ENCODE measurements at regions of chr9 and their contacts with region 1.

Region 1: GRCh38 chr9:84404095-84404686 is 63.6 kb upstream of the SLC28A3 start:
- ATAC-seq: peak in 2 of 8 experiments; percentile 39 to 40
- H3K4me3 ChIP-seq: no peak overlapping the region
- H3K27ac ChIP-seq: no peak overlapping the region
- H3K4me1 ChIP-seq: no peaks in the 10 kb centered on the region

Region 2: DNA sequence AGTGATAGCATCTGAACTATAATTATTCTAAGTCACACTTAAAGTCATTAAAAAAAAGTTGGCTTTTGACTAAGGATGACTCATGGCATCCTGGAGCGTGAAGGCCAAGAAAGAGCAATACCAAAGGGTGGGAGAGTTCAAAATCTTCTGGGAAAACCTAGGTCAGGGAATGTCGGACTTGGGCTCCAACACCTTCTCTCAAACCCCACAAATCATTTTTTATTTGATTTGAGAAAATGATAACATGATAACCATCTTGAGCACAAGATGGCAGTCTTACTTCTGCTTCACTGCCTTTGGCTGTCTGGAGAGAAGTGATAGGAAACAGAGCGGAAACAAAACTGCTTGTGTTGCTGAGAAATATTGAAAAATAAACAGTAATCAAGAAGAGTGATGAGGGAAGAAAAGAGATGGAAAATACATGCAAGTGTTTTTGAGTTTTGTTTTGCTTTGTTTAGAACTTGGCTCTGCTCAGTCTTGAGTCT is 248.4 kb after region 1 on chr9:
- in situ Hi-C with region 1: loop called in 3 of 9 experiments (anchors 10 to 25 kb)
- ATAC-seq: peak in 2 of 8 experiments; percentile 51
- H3K4me3 ChIP-seq: no peak overlapping the region
- H3K27ac ChIP-seq: no peak overlapping the region
- H3K4me1 ChIP-seq: no peaks in the 10 kb centered on the region

Region 3: DNA sequence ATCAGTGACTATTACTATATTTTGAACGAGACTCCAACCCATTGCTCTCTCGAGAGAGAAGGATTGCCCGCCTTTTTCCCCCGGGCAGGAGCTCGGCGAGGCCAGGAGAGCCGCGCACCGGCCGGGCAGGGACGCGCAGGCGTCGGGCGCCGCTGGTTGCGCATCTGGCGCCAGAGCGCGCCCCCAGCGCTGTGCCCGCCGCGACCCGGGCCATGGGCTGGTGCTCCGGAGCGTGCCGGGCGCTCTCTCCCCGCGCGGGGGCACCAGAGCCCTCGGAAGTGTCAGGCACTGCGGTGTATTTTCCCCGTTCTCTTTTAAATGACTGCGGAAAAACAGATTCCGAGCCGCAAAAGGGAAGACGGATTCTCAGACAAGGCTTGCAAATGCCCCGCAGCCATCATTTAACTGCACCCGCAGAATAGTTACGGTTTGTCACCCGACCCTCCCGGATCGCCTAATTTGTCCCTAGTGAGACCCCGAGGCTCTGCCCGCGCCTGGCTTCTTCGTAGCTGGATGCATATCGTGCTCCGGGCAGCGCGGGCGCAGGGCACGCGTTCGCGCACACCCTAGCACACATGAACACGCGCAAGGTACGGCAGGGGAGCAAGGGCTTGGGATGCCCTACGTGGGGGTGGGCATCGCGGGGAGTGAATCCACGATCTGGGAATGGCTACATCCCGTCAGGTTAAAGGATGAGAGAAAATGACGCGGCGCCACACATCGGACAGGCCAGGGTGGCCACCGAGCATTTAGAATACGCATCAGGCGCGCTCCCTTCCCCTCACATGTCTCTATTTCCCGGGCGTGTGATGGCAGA is 264.2 kb after region 1 on chr9:
- in situ Hi-C with region 1: loop called in 2 of 9 experiments (anchors 25 kb)
- ATAC-seq: peak; percentile 63 to 93 (median 85)
- H3K4me3 ChIP-seq: peak overlapping the region; percentile 48 to 78 (median 69)
- H3K27ac ChIP-seq: peak overlapping the region; percentile 45
- H3K4me1 ChIP-seq: no peaks in the 10 kb centered on the region

Region 4: GRCh38 chr9:84932915-84933527 is 528.8 kb after region 1 on chr9:
- in situ Hi-C with region 1: loop called in 1 of 9 experiments (anchors 25 kb)
- ATAC-seq: peak in 7 of 8 experiments; percentile 25 to 76 (median 47)
- H3K4me3 ChIP-seq: no peak overlapping the region
- H3K27ac ChIP-seq: no peak overlapping the region
- H3K4me1 ChIP-seq: peaks cover 22 to 28% of the 10 kb centered on the region in 2 donors

Region 5: GRCh38 chr9:85610074-85610860 is 1206.1 kb after region 1 on chr9:
- in situ Hi-C with region 1: loop called in 4 of 9 experiments (anchors 25 kb)
- ATAC-seq: peak; percentile 54 to 98 (median 79)
- H3K4me3 ChIP-seq: no peak overlapping the region
- H3K27ac ChIP-seq: no peak overlapping the region
- H3K4me1 ChIP-seq: peaks cover 0 to 2% of the 10 kb centered on the region in 2 donors

Measured in motor neuron (in vitro differentiated cells).